ENCODE measurements at regions of chr7 and their contacts with region 1.

Region 1: GRCh38 chr7:128883622-128884501 is 21.2 kb downstream of the ATP6V1F start:
- DNase-seq: peak; percentile 77 to 92 (median 83)
- ATAC-seq: peak; percentile 43 to 72 (median 58)
- H3K4me3 ChIP-seq: peak overlapping the region in 3 of 12 donors; percentile 8 to 33 (median 24)
- H3K27ac ChIP-seq: no peak overlapping the region
- H3K4me1 ChIP-seq: peaks cover 0 to 8% (median 0%) of the 10 kb centered on the region in 12 donors
- H3K27me3 ChIP-seq: no peaks in the 10 kb centered on the region
- CTCF ChIP-seq: peak; percentile 89 to 98 (median 96)
- POLR2A ChIP-seq: no peak

Region 2: DNA sequence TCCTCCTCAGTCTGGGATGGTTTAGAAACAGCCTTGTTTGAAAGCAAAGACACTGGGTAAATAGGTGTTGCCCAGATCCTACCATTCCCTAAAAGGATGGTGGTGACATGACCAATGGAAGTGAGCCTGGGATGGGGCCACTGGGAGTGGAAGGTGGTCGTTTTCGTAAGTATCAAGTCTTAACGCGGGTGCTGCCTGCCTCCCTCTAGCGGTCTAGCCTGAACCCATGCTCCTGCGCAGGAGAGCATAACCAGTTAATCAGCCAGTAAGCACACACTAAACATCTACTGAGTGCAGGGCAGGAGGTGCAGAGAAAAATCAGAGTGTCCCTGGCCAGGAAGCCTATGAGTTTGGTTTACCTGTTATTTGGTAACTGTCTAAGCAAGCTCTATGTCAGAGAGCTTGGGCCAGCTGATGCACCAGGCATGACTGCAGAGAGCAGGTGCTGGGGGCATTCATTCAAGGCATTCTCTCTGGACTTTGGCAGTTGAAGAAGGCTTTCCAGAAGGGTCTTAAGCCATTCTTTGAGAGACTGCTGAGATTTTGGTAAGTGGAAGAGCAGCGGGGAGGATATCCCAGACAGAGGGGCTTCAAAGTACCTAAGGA is 210.8 kb before region 1 on chr7:
- intact Hi-C with region 1: loop called in 1 of 10 experiments (anchors 10 kb)
- DNase-seq: no peak
- ATAC-seq: peak in 3 of 4 donors; percentile 61 to 68 (median 66)
- H3K4me3 ChIP-seq: no peak overlapping the region
- H3K27ac ChIP-seq: no peak overlapping the region
- H3K4me1 ChIP-seq: peaks cover 0 to 8% (median 0%) of the 10 kb centered on the region in 12 donors
- H3K27me3 ChIP-seq: no peaks in the 10 kb centered on the region
- CTCF ChIP-seq: peak in 9 of 12 donors; percentile 15 to 47 (median 28)
- POLR2A ChIP-seq: no peak

Region 3: DNA sequence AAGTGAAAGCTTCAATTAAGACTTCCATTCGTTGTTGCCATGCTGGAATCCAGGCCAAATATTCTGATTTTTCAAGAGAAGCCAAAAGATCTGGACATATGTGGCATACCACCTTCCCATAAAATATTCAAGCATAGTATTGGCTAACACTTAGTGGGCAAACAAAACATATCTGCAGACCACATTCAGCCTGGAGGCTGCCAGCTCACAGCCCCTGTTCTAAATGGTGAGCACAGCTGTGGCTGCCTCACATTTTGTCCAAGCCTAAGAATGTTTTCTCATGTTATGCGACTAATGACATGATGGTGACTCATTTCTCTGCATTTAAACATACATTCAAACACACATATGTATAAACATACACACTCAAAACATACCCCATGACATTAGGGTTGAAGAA is 155.3 kb before region 1 on chr7:
- intact Hi-C with region 1: loop called in 2 of 10 experiments (anchors 5 kb)
- DNase-seq: no peak
- ATAC-seq: no peak
- H3K4me3 ChIP-seq: no peak overlapping the region
- H3K27ac ChIP-seq: no peak overlapping the region
- H3K4me1 ChIP-seq: peaks cover 0 to 5% (median 0%) of the 10 kb centered on the region in 12 donors
- H3K27me3 ChIP-seq: no peaks in the 10 kb centered on the region
- CTCF ChIP-seq: no peak
- POLR2A ChIP-seq: no peak

Region 4: DNA sequence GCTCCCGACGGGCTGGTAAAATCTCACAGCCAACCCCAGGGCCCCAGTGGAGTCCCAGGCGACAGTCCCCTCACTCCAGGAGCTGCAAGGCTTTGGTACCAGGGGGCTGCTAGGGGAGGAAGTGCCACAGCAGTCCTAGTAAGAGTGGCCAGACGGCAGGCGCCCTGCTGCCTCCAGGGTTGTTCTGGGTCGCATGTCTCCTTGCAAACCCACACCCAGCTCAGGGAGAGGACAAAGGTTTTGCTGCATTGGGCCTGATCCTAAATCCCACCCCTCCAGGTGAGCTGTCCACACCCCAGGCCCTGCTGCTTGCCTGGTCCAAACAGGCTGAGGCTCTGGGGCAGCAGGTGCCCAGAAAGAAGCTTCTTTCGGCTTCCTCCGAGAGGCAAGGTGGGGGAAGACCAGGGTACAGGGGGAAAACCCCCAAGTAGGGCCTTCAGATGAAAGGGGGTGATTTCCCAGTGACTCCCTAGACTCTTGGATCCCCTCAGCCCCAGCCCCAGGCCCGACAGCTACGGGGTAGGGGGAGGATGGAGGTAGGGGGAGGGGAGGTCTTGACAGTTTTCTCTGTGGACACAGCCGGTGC is 30.8 kb after region 1 on chr7:
- intact Hi-C with region 1: no loop called
- DNase-seq: peak in 1 of 5 donors; percentile 24
- ATAC-seq: no peak
- H3K4me3 ChIP-seq: no peak overlapping the region
- H3K27ac ChIP-seq: no peak overlapping the region
- H3K4me1 ChIP-seq: peaks cover 0 to 26% (median 6%) of the 10 kb centered on the region in 12 donors
- H3K27me3 ChIP-seq: peaks cover 19 to 62% (median 37%) of the 10 kb centered on the region in 9 donors
- CTCF ChIP-seq: no peak
- POLR2A ChIP-seq: no peak

Region 5: DNA sequence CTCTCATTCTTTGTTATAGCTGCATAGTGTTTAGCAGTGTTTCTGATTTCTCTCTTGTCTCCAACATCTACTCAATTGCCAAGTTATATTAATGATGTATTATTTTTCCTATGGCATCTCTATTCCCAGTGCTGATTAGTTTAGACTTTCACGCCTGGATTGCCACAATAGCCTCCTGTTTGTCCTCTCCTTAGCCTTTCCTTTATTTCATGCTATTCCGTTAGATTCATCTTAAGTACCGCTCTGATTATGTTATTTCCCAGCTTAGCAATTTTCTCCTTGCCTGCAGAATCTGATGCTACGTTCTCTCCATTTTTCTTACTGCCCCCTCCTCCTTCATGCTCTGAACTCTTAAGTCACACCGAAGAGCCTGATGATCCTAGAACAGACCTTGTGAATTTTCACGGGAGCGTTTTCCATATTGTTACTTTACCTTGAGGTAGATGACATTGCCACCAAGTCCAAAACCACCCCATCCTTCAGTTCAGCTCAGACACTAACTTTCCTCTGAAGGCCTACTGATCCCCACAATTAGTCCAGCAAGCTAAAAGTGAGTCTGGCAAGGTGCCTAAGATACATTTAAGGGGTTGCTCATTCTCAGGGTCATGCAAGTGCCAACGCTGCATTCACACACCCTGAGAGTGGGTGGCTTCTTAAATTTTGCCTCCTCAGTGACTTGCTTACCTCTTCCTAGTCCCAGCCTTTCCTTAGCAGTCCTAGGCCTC is 721.0 kb after region 1 on chr7:
- intact Hi-C with region 1: loop called in 1 of 10 experiments (anchors 5 kb)
- DNase-seq: no peak
- ATAC-seq: no peak
- H3K4me3 ChIP-seq: no peak overlapping the region
- H3K27ac ChIP-seq: no peak overlapping the region
- H3K4me1 ChIP-seq: peaks cover 0 to 33% (median 2%) of the 10 kb centered on the region in 12 donors
- H3K27me3 ChIP-seq: no peaks in the 10 kb centered on the region
- CTCF ChIP-seq: no peak
- POLR2A ChIP-seq: no peak